ENCODE measurements at regions of chr12 and their contacts with region 1.

Region 1: GRCh38 chr12:108099073-108099472 is 30.0 kb upstream of the WSCD2 start:
- DNase-seq: peak; percentile 46
- ATAC-seq: peak; percentile 49
- H3K4me3 ChIP-seq: no peak overlapping the region
- H3K4me3 Mint-ChIP-seq: no peak overlapping the region
- H3K27ac ChIP-seq: no peak overlapping the region
- H3K27ac Mint-ChIP-seq: no peak overlapping the region
- H3K4me1 ChIP-seq: no peaks in the 10 kb centered on the region
- H3K4me1 Mint-ChIP-seq: no peaks in the 10 kb centered on the region
- H3K27me3 ChIP-seq: no peaks in the 10 kb centered on the region
- H3K27me3 Mint-ChIP-seq: peaks cover 9% of the 10 kb centered on the region
- CTCF ChIP-seq: peak; percentile 65

Region 2: GRCh38 chr12:108129017-108129812 is 30.1 kb after region 1 on chr12 and contains the start of gene WSCD2:
- CTCF ChIA-PET with region 1: interaction called, 3 read pairs
- POLR2A ChIA-PET with region 1: no interaction called
- intact Hi-C with region 1: loop called (anchors 2 kb)
- DNase-seq: peak; percentile 62
- ATAC-seq: peak; percentile 87
- H3K4me3 ChIP-seq: peak within 1 kb of the TSS in 4 of 5 experiments; percentile 31 to 50 (median 38)
- H3K4me3 Mint-ChIP-seq: peak within 1 kb of the TSS; percentile 81
- H3K27ac ChIP-seq: no peak within 1 kb of the TSS
- H3K27ac Mint-ChIP-seq: no peak within 1 kb of the TSS
- H3K4me1 ChIP-seq: peaks cover 11 to 14% of the 10 kb centered on the region in 2 donors
- H3K4me1 Mint-ChIP-seq: peaks cover 30% of the 10 kb centered on the region
- H3K27me3 ChIP-seq: peaks cover 0 to 50% (median 18%) of the 10 kb centered on the region in 4 experiments
- H3K27me3 Mint-ChIP-seq: peaks cover 40% of the 10 kb centered on the region
- CTCF ChIP-seq: no peak
- total RNA-seq, gene WSCD2: 5.1 and 5.9 TPM in 2 replicates

Region 3: DNA sequence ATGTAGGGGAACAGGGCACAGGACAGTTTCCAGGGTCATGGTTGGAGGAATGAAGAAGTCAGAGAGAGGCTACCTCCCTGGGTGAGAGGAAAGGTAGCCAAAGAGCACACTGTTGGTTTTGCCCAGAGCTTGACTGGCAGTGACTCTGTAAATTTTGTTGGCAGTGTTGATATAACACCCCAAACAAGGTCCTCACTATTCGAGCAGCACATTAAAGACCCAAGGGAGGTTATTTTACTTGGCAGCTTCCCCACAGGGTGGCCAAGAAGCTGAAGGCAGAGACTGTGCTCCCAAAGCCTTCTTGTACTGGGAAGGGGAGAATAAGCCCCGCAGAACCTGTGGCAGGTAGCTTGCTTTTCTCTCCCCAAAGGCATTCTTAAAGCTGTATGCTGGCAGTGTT is 70.6 kb after region 1 on chr12:
- CTCF ChIA-PET with region 1: no interaction called
- POLR2A ChIA-PET with region 1: no interaction called
- intact Hi-C with region 1: no loop called
- DNase-seq: no peak
- ATAC-seq: no peak
- H3K4me3 ChIP-seq: no peak overlapping the region
- H3K4me3 Mint-ChIP-seq: no peak overlapping the region
- H3K27ac ChIP-seq: no peak overlapping the region
- H3K27ac Mint-ChIP-seq: no peak overlapping the region
- H3K4me1 ChIP-seq: no peaks in the 10 kb centered on the region
- H3K4me1 Mint-ChIP-seq: no peaks in the 10 kb centered on the region
- H3K27me3 ChIP-seq: peaks cover 0 to 8% (median 0%) of the 10 kb centered on the region in 4 experiments
- H3K27me3 Mint-ChIP-seq: peaks cover 14% of the 10 kb centered on the region
- CTCF ChIP-seq: no peak

Region 4: GRCh38 chr12:108193917-108194316 is 94.8 kb after region 1 on chr12:
- CTCF ChIA-PET with region 1: interaction called, 14 read pairs
- POLR2A ChIA-PET with region 1: no interaction called
- intact Hi-C with region 1: loop called (anchors 1 kb)
- DNase-seq: peak; percentile 44
- ATAC-seq: no peak
- H3K4me3 ChIP-seq: no peak overlapping the region
- H3K4me3 Mint-ChIP-seq: no peak overlapping the region
- H3K27ac ChIP-seq: no peak overlapping the region
- H3K27ac Mint-ChIP-seq: no peak overlapping the region
- H3K4me1 ChIP-seq: peaks cover 0 to 3% of the 10 kb centered on the region in 2 donors
- H3K4me1 Mint-ChIP-seq: peaks cover 11% of the 10 kb centered on the region
- H3K27me3 ChIP-seq: no peaks in the 10 kb centered on the region
- H3K27me3 Mint-ChIP-seq: peaks cover 3% of the 10 kb centered on the region
- CTCF ChIP-seq: peak; percentile 66